ENCODE measurements at regions of chr17 and their contacts with region 1.

Region 1: DNA sequence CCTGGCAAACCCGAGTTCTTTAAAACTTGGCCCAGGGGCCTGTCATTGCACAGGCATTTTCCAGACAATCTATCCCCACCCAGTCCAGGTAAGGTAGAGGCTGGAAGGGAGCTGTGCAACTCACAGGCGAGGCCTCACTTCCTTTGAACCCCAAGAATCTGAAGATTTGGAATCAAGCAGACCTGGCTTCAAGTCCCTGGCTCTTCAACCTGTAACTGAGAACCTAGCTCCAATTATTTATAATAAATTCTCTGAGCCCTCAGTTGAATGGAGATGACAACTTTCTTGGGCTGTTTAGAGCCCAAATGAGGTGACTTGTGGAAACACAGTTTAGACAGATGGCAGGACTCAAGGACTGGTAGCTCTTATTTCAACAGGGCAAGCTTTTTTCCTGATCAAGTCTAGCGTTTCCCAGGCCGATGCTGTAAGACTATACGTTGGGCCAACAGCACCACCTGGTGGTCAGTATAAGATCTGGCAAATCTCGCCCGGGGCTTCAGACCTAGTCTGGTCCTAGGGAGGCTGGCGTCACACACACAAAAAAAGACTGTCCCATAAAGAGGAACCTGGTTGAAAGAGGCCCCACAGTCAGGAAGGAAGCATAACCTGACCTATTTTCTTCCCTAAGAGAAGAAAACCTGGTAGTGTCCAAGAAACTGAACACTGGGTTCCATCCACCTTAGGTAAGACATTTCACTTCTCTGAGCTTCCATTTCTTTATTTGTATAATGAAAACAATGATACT is 117.9 kb downstream of the C17orf67 start:
- DNase-seq: peak in 1 of 2 experiments; percentile 89
- H3K4me3 ChIP-seq: no peak overlapping the region
- H3K27ac ChIP-seq: no peak overlapping the region
- H3K4me1 ChIP-seq: peaks cover 0 to 2% (median 0%) of the 10 kb centered on the region in 4 experiments; a peak in 1 of 7 replicates
- H3K27me3 ChIP-seq: no peaks in the 10 kb centered on the region
- CTCF ChIP-seq: peak; percentile 67 to 85 (median 81)
- EP300 ChIP-seq: no peak
- POLR2A ChIP-seq: no peak
- RAD21 ChIP-seq: peak; percentile 93 to 95

Region 2: GRCh38 chr17:56510554-56511342 is 205.0 kb before region 1 on chr17:
- CTCF ChIA-PET with region 1: interaction called, 13 read pairs
- POLR2A ChIA-PET with region 1: no interaction called
- DNase-seq: no peak
- H3K4me3 ChIP-seq: no peak overlapping the region
- H3K27ac ChIP-seq: no peak overlapping the region
- H3K4me1 ChIP-seq: no peaks in the 10 kb centered on the region
- H3K27me3 ChIP-seq: no peaks in the 10 kb centered on the region
- CTCF ChIP-seq: peak in 1 of 3 experiments; percentile 12; a peak in 1 of 4 replicates
- EP300 ChIP-seq: no peak
- POLR2A ChIP-seq: no peak
- RAD21 ChIP-seq: no peak; a peak in 1 of 4 replicates

Region 3: DNA sequence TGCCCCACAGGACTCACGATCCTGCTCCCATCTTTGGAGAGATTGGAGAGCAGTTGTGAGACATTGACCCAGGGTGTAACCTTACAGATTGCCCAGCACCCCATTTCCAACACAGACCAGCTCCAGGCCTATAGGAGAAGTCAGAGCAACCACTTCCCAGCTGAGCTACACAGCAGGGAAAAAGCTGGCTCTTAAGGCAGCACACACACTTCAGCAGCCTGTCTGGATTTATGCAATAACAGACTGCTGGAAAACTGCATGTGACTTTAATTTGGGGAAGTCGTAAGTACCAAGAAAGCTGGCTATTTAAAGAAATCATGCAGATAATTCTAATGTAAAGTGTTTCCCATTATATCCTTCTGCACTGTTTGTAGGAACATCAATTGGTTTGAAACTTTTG is 91.5 kb before region 1 on chr17:
- CTCF ChIA-PET with region 1: interaction called, 10 read pairs
- POLR2A ChIA-PET with region 1: no interaction called
- DNase-seq: no peak
- H3K4me3 ChIP-seq: no peak overlapping the region
- H3K27ac ChIP-seq: no peak overlapping the region
- H3K4me1 ChIP-seq: peaks cover 0 to 4% (median 0%) of the 10 kb centered on the region in 4 experiments; a peak in 3 of 7 replicates
- H3K27me3 ChIP-seq: no peaks in the 10 kb centered on the region
- CTCF ChIP-seq: no peak
- EP300 ChIP-seq: no peak
- POLR2A ChIP-seq: no peak
- RAD21 ChIP-seq: no peak

Region 4: GRCh38 chr17:56679115-56679766 is 36.5 kb before region 1 on chr17:
- CTCF ChIA-PET with region 1: interaction called, 20 read pairs
- POLR2A ChIA-PET with region 1: interaction called, 3 read pairs
- DNase-seq: no peak
- H3K4me3 ChIP-seq: peak overlapping the region; percentile 62 to 65 (median 62)
- H3K27ac ChIP-seq: no peak overlapping the region
- H3K4me1 ChIP-seq: peaks cover 2 to 4% (median 3%) of the 10 kb centered on the region in 4 experiments; a peak in 4 of 7 replicates
- H3K27me3 ChIP-seq: peaks cover 3 to 49% (median 34%) of the 10 kb centered on the region in 4 experiments
- CTCF ChIP-seq: peak; percentile 26 to 53 (median 50)
- EP300 ChIP-seq: no peak
- POLR2A ChIP-seq: no peak
- RAD21 ChIP-seq: peak; percentile 44 to 57; a peak in 3 of 4 replicates

Region 5: DNA sequence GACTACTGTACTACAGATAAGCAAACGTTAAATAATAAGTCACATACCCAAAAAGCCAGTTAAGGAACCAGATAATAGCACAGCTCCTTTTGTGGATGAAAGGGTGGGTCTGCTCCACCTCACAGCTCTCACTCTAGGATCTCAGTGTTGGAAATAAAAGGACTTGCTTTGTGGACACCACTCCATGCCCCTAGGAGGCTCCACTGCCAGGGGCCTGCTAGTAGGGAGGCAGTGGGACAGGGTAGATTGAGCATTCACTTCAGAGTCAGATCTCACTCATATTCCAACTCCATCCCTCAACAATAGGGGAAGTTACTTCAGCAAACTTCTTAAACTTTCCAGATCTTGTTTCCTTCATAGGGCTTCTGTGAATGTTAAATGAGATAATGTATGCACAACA is 11.4 kb after region 1 on chr17:
- CTCF ChIA-PET with region 1: interaction called, 19 read pairs
- POLR2A ChIA-PET with region 1: no interaction called
- DNase-seq: no peak
- H3K4me3 ChIP-seq: no peak overlapping the region
- H3K27ac ChIP-seq: no peak overlapping the region
- H3K4me1 ChIP-seq: no peaks in the 10 kb centered on the region
- H3K27me3 ChIP-seq: no peaks in the 10 kb centered on the region
- CTCF ChIP-seq: peak in 2 of 3 experiments; percentile 6 to 27; a peak in 3 of 4 replicates
- EP300 ChIP-seq: no peak
- POLR2A ChIP-seq: no peak
- RAD21 ChIP-seq: no peak

Region 6: DNA sequence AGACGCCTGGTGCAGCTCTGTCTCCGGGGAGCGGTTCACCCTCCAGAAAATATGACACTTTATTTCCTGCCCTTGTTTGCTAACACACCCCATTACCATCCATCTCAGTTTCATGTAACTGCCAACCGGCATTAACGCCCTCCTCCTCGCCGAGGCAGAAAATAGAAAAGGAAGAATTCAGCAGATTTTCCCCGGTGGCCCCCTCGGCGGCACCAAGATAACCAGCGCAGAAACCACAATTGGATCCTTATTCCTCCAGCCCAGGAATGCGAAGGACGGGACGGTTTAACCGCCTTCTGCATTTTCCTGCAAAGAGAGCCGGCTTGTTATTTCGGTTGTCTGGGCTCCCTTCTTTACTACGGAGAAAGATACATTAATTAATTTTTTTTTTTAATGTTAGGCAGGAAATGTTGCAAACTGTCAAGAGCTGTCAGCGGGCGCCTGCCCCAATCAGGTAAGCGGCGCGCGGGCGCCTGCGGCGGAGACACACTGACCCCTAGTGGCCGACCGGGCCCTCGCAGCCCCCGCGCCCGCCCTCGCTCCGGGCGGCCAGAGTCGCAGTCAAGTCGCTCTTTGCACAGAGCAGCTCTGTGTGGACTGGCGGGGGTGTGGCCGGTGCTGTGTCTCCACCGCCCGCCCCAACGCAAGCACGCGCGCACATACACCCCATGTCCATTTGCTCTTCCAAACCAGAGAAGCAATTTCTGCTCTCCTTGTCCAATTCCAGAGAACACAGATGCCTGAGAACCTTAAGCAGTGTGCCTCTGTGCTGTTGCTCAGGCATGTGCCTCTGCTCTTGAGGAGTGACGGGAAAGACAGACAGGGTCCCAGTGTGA is 64.3 kb after region 1 on chr17:
- CTCF ChIA-PET with region 1: interaction called, 22 read pairs
- POLR2A ChIA-PET with region 1: interaction called, 3 read pairs
- DNase-seq: peak; percentile 36 to 95
- H3K4me3 ChIP-seq: peak overlapping the region in 3 of 4 experiments; percentile 11 to 48 (median 30); a peak in 4 of 8 replicates
- H3K27ac ChIP-seq: no peak overlapping the region
- H3K4me1 ChIP-seq: peaks cover 0 to 3% (median under 1%) of the 10 kb centered on the region in 4 experiments; a peak in 4 of 7 replicates
- H3K27me3 ChIP-seq: peaks cover 0 to 22% (median 13%) of the 10 kb centered on the region in 4 experiments; a peak in 5 of 7 replicates
- CTCF ChIP-seq: peak; percentile 86 to 89 (median 88)
- EP300 ChIP-seq: no peak
- POLR2A ChIP-seq: no peak
- RAD21 ChIP-seq: peak; percentile 90 to 93